RWPE1 (cell line): ENCODE measurements at regions of chr18 and their contacts with region 1.

Region 1: DNA sequence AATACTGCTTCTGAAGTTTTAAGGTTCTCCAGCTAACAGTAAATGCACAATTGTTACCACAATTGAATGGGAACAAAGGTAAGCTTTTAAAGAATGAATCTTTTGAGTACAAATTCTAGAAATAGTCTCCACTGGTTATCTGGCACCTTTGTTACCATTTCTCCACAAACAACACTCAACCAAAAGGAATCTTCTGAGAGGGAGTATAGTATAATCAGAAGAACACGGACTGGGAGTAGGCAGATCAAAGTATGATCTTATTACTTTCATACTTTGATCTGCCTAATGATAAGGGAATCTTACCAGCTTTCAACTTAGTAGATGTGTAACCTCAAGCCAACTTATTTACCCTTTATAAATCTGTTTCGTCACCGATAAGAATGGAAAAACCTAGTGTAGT is 1.4 kb downstream of the CEP76 start:
- DNase-seq: no peak
- H3K27ac ChIP-seq: no peak overlapping the region
- CTCF ChIP-seq: no peak

Region 2: GRCh38 chr18:12711446-12711845 is 10.3 kb after region 1 on chr18:
- CTCF ChIA-PET with region 1: no interaction called
- POLR2A ChIA-PET with region 1: no interaction called
- DNase-seq: no peak
- H3K27ac ChIP-seq: no peak overlapping the region
- CTCF ChIP-seq: no peak

Region 3: GRCh38 chr18:12861637-12862036 is 160.5 kb after region 1 on chr18:
- CTCF ChIA-PET with region 1: interaction called, 7 read pairs
- POLR2A ChIA-PET with region 1: interaction called, 11 read pairs
- DNase-seq: no peak
- H3K27ac ChIP-seq: no peak overlapping the region
- CTCF ChIP-seq: no peak